ENCODE measurements at regions of chr1 and their contacts with region 1.

Region 1: GRCh38 chr1:114346480-114347029 is 164.4 kb downstream of the TRIM33 start:
- DNase-seq: peak; percentile 99
- ATAC-seq: peak; percentile 84 to 98 (median 88)
- H3K4me3 ChIP-seq: peak overlapping the region; percentile 8
- H3K4me3 Mint-ChIP-seq: peak overlapping the region; percentile 93
- H3K27ac ChIP-seq: peak overlapping the region; percentile 47
- H3K27ac Mint-ChIP-seq: peak overlapping the region; percentile 96 to 98
- H3K4me1 ChIP-seq: peaks cover 57% of the 10 kb centered on the region
- H3K4me1 Mint-ChIP-seq: peaks cover 50 to 52% of the 10 kb centered on the region in 2 donors
- H3K27me3 ChIP-seq: no peaks in the 10 kb centered on the region
- H3K27me3 Mint-ChIP-seq: no peaks in the 10 kb centered on the region
- CTCF ChIP-seq: peak; percentile 100

Region 2: GRCh38 chr1:113928941-113929749 is 417.4 kb before region 1 on chr1 and contains the start of gene HIPK1:
- intact Hi-C with region 1: loop called (anchors 1 kb)
- DNase-seq: peak; percentile 91 to 94
- ATAC-seq: peak; percentile 57 to 82 (median 58)
- H3K4me3 ChIP-seq: peak within 1 kb of the TSS; percentile 80
- H3K4me3 Mint-ChIP-seq: peak within 1 kb of the TSS; percentile 98
- H3K27ac ChIP-seq: peak within 1 kb of the TSS; percentile 98
- H3K27ac Mint-ChIP-seq: peak within 1 kb of the TSS; percentile 96 to 99
- H3K4me1 ChIP-seq: peaks cover 28% of the 10 kb centered on the region
- H3K4me1 Mint-ChIP-seq: peaks cover 55 to 59% of the 10 kb centered on the region in 2 donors
- H3K27me3 ChIP-seq: no peaks in the 10 kb centered on the region
- H3K27me3 Mint-ChIP-seq: no peaks in the 10 kb centered on the region
- CTCF ChIP-seq: no peak
- total RNA-seq, gene HIPK1: 238 to 283 (median 261) TPM

Region 3: DNA sequence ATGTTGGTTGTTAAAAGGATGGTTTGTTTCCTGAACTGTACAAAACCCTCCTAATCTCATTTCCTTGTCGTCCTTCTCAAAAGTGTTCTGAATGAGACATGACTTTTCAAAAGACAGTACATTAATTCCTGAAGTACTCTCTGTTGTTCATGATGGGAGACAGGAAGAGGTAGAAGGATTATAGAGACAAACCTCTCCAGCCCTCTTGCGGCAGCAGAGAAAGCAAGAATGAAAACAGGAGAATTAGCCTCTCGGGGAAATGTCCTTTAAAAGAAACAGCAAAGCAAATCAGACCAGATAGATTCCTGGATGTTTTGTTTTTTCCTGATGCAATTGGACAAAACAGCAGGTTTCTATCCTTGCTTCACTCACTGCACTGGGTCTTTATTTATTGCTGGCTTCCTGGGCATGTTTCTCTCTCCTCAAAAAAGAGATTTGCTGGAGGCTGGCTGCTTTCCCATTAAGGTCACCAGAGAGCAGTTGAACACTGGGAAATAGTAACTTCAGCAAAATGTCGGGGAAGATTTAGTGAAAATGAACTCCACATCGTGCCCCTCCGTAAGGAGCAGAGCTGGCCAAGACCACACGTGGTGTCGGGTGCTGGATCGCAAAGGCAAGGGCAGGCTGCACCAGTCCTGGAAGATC is 47.1 kb before region 1 on chr1:
- intact Hi-C with region 1: no loop called
- DNase-seq: no peak
- ATAC-seq: no peak
- H3K4me3 ChIP-seq: no peak overlapping the region
- H3K4me3 Mint-ChIP-seq: no peak overlapping the region
- H3K27ac ChIP-seq: no peak overlapping the region
- H3K27ac Mint-ChIP-seq: no peak overlapping the region
- H3K4me1 ChIP-seq: peaks cover 9% of the 10 kb centered on the region
- H3K4me1 Mint-ChIP-seq: peaks cover 30% of the 10 kb centered on the region in 2 donors
- H3K27me3 ChIP-seq: no peaks in the 10 kb centered on the region
- H3K27me3 Mint-ChIP-seq: peaks cover 0 to 5% of the 10 kb centered on the region in 2 donors
- CTCF ChIP-seq: no peak

Region 4: GRCh38 chr1:114323959-114324661 is 22.4 kb before region 1 on chr1:
- intact Hi-C with region 1: loop called (anchors 2 kb)
- DNase-seq: no peak
- ATAC-seq: no peak
- H3K4me3 ChIP-seq: no peak overlapping the region
- H3K4me3 Mint-ChIP-seq: no peak overlapping the region
- H3K27ac ChIP-seq: no peak overlapping the region
- H3K27ac Mint-ChIP-seq: peak overlapping the region; percentile 58 to 67
- H3K4me1 ChIP-seq: peaks cover 8% of the 10 kb centered on the region
- H3K4me1 Mint-ChIP-seq: peaks cover 63 to 74% of the 10 kb centered on the region in 2 donors
- H3K27me3 ChIP-seq: no peaks in the 10 kb centered on the region
- H3K27me3 Mint-ChIP-seq: no peaks in the 10 kb centered on the region
- CTCF ChIP-seq: no peak

Region 5: GRCh38 chr1:114428083-114428749 is 81.7 kb after region 1 on chr1:
- intact Hi-C with region 1: loop called (anchors 1 kb)
- DNase-seq: peak in 1 of 2 donors; percentile 58
- ATAC-seq: peak in 1 of 3 donors; percentile 39
- H3K4me3 ChIP-seq: no peak overlapping the region
- H3K4me3 Mint-ChIP-seq: no peak overlapping the region
- H3K27ac ChIP-seq: no peak overlapping the region
- H3K27ac Mint-ChIP-seq: no peak overlapping the region
- H3K4me1 ChIP-seq: no peaks in the 10 kb centered on the region
- H3K4me1 Mint-ChIP-seq: no peaks in the 10 kb centered on the region
- H3K27me3 ChIP-seq: no peaks in the 10 kb centered on the region
- H3K27me3 Mint-ChIP-seq: no peaks in the 10 kb centered on the region
- CTCF ChIP-seq: peak; percentile 70

Region 6: GRCh38 chr1:114558544-114558943 is 212.0 kb after region 1 on chr1:
- intact Hi-C with region 1: loop called (anchors 2 kb)
- DNase-seq: peak in 1 of 2 donors; percentile 46
- ATAC-seq: peak in 2 of 3 donors; percentile 58 to 73
- H3K4me3 ChIP-seq: no peak overlapping the region
- H3K4me3 Mint-ChIP-seq: no peak overlapping the region
- H3K27ac ChIP-seq: no peak overlapping the region
- H3K27ac Mint-ChIP-seq: no peak overlapping the region
- H3K4me1 ChIP-seq: peaks cover 2% of the 10 kb centered on the region
- H3K4me1 Mint-ChIP-seq: no peaks in the 10 kb centered on the region
- H3K27me3 ChIP-seq: no peaks in the 10 kb centered on the region
- H3K27me3 Mint-ChIP-seq: no peaks in the 10 kb centered on the region
- CTCF ChIP-seq: peak; percentile 59

Region 7: GRCh38 chr1:114716304-114717170 is 370.0 kb after region 1 on chr1 and contains the start of gene NRAS:
- intact Hi-C with region 1: loop called (anchors 2 kb)
- DNase-seq: peak; percentile 97
- ATAC-seq: peak; percentile 93 to 99 (median 96)
- H3K4me3 ChIP-seq: peak within 1 kb of the TSS; percentile 89
- H3K4me3 Mint-ChIP-seq: peak within 1 kb of the TSS; percentile 97
- H3K27ac ChIP-seq: peak within 1 kb of the TSS; percentile 96
- H3K27ac Mint-ChIP-seq: peak within 1 kb of the TSS; percentile 98 to 99
- H3K4me1 ChIP-seq: peaks cover 13% of the 10 kb centered on the region
- H3K4me1 Mint-ChIP-seq: peaks cover 25% of the 10 kb centered on the region in 2 donors
- H3K27me3 ChIP-seq: no peaks in the 10 kb centered on the region
- H3K27me3 Mint-ChIP-seq: no peaks in the 10 kb centered on the region
- CTCF ChIP-seq: no peak
- total RNA-seq, gene NRAS: 41.1 to 45.7 (median 43.8) TPM

Region 8: GRCh38 chr1:115098979-115099692 is 752.6 kb after region 1 on chr1:
- intact Hi-C with region 1: loop called (anchors 10 kb)
- DNase-seq: peak; percentile 57 to 94
- ATAC-seq: peak; percentile 88 to 95 (median 93)
- H3K4me3 ChIP-seq: peak overlapping the region; percentile 65
- H3K4me3 Mint-ChIP-seq: peak overlapping the region; percentile 93
- H3K27ac ChIP-seq: peak overlapping the region; percentile 95
- H3K27ac Mint-ChIP-seq: peak overlapping the region; percentile 99
- H3K4me1 ChIP-seq: peaks cover 20% of the 10 kb centered on the region
- H3K4me1 Mint-ChIP-seq: peaks cover 34 to 44% of the 10 kb centered on the region in 2 donors
- H3K27me3 ChIP-seq: no peaks in the 10 kb centered on the region
- H3K27me3 Mint-ChIP-seq: no peaks in the 10 kb centered on the region
- CTCF ChIP-seq: no peak